A673 (cell line): ENCODE measurements at regions of chr5 and their contacts with region 1.

Region 1: GRCh38 chr5:89595056-89595455 is 712.1 kb upstream of the MEF2C start:
- DNase-seq: peak; percentile 69
- H3K4me3 ChIP-seq: no peak overlapping the region
- H3K27ac ChIP-seq: no peak overlapping the region
- H3K4me1 ChIP-seq: no peaks in the 10 kb centered on the region
- H3K27me3 ChIP-seq: peaks cover 5% of the 10 kb centered on the region
- CTCF ChIP-seq: no peak

Region 2: DNA sequence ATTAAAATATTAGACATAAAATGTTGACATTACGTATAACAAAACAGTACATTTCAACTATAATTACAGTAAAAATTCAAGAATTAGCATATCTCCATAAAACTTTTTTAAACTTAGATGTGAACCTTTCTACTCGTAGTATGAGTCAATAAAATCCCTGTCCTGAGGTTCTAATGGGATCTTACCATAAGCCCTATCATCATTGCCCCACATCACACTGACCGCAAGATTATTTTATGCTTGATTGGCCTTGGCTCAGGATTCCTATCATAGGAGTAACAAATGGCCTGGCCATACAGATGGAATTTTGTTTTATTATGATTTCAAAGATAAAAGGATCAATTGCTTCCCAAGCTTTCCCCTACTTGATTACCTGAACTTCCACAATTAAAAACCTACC is 950.4 kb before region 1 on chr5:
- CTCF ChIA-PET with region 1: no interaction called
- POLR2A ChIA-PET with region 1: no interaction called
- intact Hi-C with region 1: no loop called
- DNase-seq: no peak
- H3K4me3 ChIP-seq: no peak overlapping the region
- H3K27ac ChIP-seq: no peak overlapping the region
- H3K4me1 ChIP-seq: no peaks in the 10 kb centered on the region
- H3K27me3 ChIP-seq: no peaks in the 10 kb centered on the region
- CTCF ChIP-seq: no peak

Region 3: GRCh38 chr5:89546657-89547056 is 48.4 kb before region 1 on chr5:
- CTCF ChIA-PET with region 1: no interaction called
- POLR2A ChIA-PET with region 1: interaction called, 14 read pairs
- intact Hi-C with region 1: no loop called
- DNase-seq: no peak
- H3K4me3 ChIP-seq: no peak overlapping the region
- H3K27ac ChIP-seq: no peak overlapping the region
- H3K4me1 ChIP-seq: no peaks in the 10 kb centered on the region
- H3K27me3 ChIP-seq: no peaks in the 10 kb centered on the region
- CTCF ChIP-seq: no peak

Region 4: DNA sequence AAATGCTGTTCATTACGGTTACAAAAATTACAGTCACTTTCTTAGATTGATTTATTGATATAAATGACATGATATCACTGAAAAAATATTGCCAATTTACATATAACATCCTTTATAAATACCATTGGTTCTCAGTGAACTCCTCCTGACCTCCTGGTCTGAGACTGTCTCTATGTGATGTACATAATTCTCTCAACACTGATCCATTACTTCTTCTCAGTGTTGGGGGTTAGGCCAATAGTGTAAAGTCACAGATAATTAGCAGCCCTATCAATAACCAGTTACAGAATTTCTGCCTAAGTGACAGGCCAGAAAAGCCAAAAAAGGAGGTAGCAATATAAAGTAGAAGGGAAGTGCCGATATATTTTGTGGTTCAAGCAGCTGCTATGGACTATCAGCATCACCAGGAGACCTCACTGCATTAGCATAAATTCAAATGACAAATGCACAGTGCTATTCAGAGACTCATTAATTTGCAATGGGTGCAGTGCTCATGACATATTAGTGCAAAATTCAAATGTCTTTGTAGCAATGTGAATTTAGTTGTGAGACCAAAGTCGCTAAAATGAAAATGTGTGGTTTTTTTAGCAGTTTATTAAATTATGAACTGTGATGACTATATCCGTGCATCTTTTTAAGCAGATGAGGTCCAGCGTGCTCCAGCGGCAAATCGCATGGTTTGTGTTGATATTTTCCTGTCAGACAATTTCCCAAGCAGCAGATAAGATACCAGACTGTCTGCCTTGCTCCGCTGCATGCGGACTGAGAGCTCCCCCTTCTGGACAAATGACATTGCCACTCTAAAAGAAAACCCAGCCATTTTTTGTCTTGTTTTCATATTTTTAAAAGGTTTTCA is 669.9 kb after region 1 on chr5:
- CTCF ChIA-PET with region 1: no interaction called
- POLR2A ChIA-PET with region 1: no interaction called
- intact Hi-C with region 1: no loop called
- DNase-seq: peak; percentile 78
- H3K4me3 ChIP-seq: no peak overlapping the region
- H3K27ac ChIP-seq: no peak overlapping the region
- H3K4me1 ChIP-seq: peaks cover 3% of the 10 kb centered on the region
- H3K27me3 ChIP-seq: no peaks in the 10 kb centered on the region
- CTCF ChIP-seq: peak; percentile 95